ENCODE measurements at regions of chr4 and their contacts with region 1.

Region 1: DNA sequence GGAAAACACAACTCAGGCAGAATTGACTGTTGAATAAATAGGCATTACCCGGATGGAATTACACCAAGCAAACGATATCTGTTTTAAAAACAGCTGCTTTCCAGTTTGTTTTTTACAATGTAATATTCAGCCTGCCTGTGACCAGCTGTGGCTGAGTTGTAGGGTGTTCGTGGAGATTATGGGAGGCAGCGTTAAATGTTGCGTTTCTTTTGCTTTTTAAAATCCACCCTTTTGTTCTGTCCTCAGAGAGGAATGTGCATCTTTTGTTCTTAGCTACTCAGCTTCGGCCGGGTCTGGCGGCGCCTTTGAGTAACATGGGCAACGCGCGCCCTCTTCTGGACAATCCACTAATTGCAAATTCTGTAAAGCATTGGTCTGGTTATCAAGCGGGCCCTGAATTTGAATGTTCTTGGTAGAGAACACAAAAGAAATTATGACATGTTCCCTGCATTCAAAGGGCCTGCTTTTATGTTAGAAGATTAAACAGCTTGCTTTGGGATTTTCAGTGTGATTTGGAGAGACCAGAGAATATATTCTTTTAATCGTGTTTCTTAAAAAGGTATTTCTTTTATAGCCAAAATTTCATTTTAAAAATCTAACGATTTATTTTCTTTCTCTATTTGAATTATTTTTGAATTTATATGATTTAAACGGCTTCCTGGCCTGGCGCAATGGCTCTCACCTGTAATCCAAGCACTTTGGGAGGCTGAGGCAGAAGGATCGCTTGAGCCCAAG is 76.3 kb upstream of the TRIM2 start:
- DNase-seq: peak; percentile 89
- H3K4me3 ChIP-seq: peak overlapping the region; percentile 59
- H3K27ac ChIP-seq: no peak overlapping the region
- H3K4me1 ChIP-seq: no peaks in the 10 kb centered on the region
- H3K27me3 ChIP-seq: no peaks in the 10 kb centered on the region

Region 2: DNA sequence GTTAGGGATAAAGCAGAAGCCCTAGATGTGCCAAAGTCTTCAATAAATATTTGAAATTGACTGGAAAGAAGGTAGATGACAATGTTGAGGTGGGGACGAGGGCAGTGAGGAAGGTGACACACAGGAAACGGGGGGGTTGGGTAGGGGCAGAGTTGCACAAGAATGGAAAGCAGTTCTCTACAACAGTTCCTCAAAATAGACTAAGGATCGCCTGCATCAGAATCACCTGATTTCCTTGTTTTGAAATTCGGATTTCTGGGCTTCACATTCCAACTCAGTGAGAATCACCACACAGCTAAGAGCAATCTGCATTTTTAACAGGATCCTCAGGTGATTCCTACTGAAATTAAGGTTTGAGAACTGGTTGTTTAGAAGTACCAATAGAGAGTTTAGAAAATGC is 277.6 kb before region 1 on chr4:
- in situ Hi-C with region 1: loop called (anchors 10 kb)
- DNase-seq: peak; percentile 50
- H3K4me3 ChIP-seq: no peak overlapping the region
- H3K27ac ChIP-seq: no peak overlapping the region
- H3K4me1 ChIP-seq: peaks cover 8% of the 10 kb centered on the region; the same call in 1 of the 2 replicates
- H3K27me3 ChIP-seq: no peaks in the 10 kb centered on the region

Region 3: DNA sequence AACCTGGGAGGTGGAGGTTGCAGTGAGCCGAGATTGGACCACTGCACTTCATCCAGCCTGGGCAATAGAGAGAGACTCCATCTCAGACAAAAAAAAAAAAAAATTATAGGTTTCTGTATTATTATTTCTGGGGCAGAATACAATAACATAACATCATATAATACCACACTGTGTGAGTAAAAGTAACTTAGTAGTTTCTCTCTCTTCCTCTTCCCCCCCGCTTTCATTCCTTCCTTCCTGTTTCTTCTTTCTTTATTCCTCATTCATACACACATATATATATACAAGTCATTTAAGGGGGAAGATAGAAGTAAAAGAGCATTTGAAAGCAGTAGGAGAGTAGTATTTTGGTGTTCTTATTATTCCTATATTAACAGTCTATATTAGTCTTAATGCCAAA is 247.7 kb before region 1 on chr4:
- in situ Hi-C with region 1: no loop called
- DNase-seq: no peak
- H3K4me3 ChIP-seq: no peak overlapping the region
- H3K27ac ChIP-seq: no peak overlapping the region
- H3K4me1 ChIP-seq: no peaks in the 10 kb centered on the region
- H3K27me3 ChIP-seq: no peaks in the 10 kb centered on the region

Region 4: GRCh38 chr4:153451911-153452657 is 324.2 kb after region 1 on chr4:
- in situ Hi-C with region 1: no loop called
- DNase-seq: no peak
- H3K4me3 ChIP-seq: no peak overlapping the region
- H3K27ac ChIP-seq: no peak overlapping the region
- H3K4me1 ChIP-seq: peaks cover 5% of the 10 kb centered on the region; the same call in 1 of the 2 replicates
- H3K27me3 ChIP-seq: no peaks in the 10 kb centered on the region